Adrenal gland (tissue), 19 donors: ENCODE measurements at regions of chr6 and their contacts with region 1.

Region 1: DNA sequence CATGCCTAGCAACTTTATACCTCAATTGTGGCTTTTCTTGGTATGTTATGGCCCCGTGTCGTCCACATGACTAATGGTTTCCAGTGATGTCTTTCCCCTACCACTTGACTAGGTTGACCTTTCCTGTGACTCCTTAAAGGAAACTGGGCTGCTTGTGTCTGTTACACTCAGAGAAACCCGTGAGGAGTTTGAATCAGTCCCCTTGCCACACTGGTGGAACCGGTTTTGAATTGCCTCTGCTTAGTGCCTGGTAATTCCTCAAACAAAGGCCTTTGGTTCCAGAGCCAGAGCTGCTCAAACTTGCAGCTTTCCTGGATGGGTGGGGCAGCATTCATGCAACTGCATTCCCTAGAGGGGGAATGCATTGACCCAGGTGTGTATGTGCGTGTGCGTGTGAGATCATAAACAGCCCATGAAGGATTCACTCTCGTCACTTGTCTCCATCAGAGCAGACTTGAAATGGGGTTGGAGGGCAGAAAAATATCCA is 22.0 kb downstream of the ECT2L start:
- DNase-seq: no peak
- H3K4me3 ChIP-seq: no peak overlapping the region
- H3K27ac ChIP-seq: no peak overlapping the region
- H3K4me1 ChIP-seq: no peaks in the 10 kb centered on the region
- H3K27me3 ChIP-seq: no peaks in the 10 kb centered on the region
- CTCF ChIP-seq: no peak
- POLR2A ChIP-seq: no peak

Region 2: DNA sequence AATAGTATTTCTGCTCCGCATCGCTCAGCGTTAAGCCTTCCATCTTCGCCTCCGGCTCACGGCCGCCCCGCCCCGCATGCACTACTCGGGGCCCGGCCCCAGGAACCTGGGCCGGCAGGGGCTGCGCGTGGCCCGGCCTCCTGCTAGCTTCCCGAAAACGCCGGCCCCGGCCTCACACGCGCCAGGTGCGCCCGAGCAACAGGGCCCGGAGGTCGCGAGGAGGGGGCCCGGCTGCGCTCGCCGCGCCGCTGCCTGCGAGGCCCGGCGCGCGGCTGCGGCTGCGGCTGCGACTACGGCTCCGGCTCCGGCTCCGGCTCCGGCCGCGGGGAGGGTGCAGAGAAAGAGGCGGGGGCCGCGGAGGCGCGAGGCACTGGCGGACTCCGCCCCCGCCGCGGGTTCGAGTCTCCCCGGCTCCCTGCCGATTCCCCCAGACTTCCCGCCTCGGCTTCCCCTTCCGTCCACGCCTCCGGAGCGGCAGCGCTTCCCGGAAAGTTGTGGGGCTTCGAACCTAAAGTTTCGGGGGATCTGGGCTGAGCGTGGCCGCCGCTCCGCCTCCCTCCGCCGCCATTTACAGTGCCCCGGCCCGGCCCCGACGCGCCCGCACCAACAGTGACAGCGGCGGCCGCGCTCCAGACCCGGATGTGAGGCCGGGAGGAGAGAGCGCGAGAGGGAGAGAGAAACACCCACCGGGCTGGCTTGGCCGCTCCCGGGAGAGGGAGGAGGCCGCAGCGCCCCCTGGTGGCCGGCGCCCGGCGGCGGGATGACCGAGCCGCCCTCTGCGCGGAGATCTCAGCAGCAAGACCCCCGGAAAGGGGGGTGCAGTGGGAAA is 170.0 kb after region 1 on chr6 and contains the start of gene REPS1:
- intact Hi-C with region 1: loop called in 1 of 2 experiments (anchors 5 kb)
- DNase-seq: peak; percentile 91 to 94 (median 92)
- H3K4me3 ChIP-seq: peak within 1 kb of the TSS; percentile 19 to 100 (median 80)
- H3K27ac ChIP-seq: peak within 1 kb of the TSS in 4 of 5 donors; percentile 77 to 95 (median 84)
- H3K4me1 ChIP-seq: peaks cover 14 to 37% of the 10 kb centered on the region in 2 donors
- H3K27me3 ChIP-seq: no peaks in the 10 kb centered on the region
- CTCF ChIP-seq: peak; percentile 78 to 100 (median 96)
- POLR2A ChIP-seq: peak; percentile 71 to 83
- total RNA-seq, gene REPS1: 19.1 to 36.8 (median 26.1) TPM